CD4-positive, alpha-beta T cell (primary cell): ENCODE measurements at regions of chr6 and their contacts with region 1.

Region 1: GRCh38 chr6:110179401-110180227 is at the start of gene WASF1:
- DNase-seq: peak; percentile 78 to 96 (median 86)
- ATAC-seq: peak; percentile 89
- H3K4me3 ChIP-seq: peak within 1 kb of the TSS; percentile 95
- H3K4me3 Mint-ChIP-seq: peak within 1 kb of the TSS; percentile 84
- H3K27ac ChIP-seq: peak within 1 kb of the TSS; percentile 74 to 78
- H3K27ac Mint-ChIP-seq: peak within 1 kb of the TSS; percentile 16
- H3K4me1 ChIP-seq: peaks cover 28% of the 10 kb centered on the region
- H3K4me1 Mint-ChIP-seq: peaks cover 12% of the 10 kb centered on the region
- H3K27me3 ChIP-seq: peaks cover 0 to 9% of the 10 kb centered on the region in 2 experiments
- H3K27me3 Mint-ChIP-seq: peaks cover 10% of the 10 kb centered on the region
- CTCF ChIP-seq: no peak
- total RNA-seq, gene WASF1: 0.19 to 0.22 TPM

Region 2: DNA sequence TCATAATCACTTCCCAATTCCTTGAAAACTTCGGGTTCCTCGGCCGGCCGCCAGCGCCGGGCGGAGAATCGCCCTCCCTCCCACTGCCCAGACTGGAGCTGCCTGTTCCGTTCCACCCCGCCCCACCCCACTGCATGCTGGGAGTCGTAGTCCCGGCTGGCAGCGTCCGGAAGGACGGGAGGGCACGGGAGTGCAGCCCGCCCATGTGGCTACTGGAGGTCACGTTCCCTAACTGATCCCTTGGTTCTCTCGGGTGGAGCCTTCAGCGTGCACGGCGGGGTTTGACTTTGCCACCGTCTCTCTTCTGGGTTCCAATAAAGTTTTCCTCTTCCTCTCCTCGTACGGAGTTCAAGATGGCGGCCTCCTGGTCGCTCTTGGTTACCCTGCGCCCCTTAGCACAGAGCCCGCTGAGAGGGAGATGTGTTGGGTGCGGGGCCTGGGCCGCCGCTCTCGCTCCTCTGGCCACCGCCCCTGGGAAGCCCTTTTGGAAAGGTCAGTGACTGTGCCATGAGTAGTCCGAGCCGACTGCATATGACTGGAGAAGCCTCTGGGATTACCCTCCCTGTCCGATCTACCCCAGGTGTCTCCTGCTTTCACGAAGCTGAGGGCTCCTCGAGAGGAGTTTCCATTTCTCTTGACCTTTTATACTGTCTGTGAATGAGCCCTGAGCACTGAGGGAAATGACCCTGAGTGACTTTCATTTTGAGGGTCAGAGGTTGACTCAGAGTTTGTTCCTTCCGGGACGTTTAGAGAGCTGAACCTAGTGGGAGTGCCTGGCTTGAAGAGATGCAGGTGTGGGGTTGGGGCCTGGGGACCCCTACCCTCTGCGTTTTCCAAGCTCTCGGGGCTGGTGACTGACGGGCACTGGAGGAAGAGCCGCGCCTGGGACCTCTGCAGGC is 1884.6 kb before region 1 on chr6 and contains the start of gene AFG1L:
- CTCF ChIA-PET with region 1: no interaction called
- POLR2A ChIA-PET with region 1: interaction called, 3 read pairs
- intact Hi-C with region 1: loop called in 1 of 2 experiments (anchors 10 kb)
- DNase-seq: peak; percentile 77 to 90 (median 83)
- ATAC-seq: peak; percentile 89
- H3K4me3 ChIP-seq: peak within 1 kb of the TSS; percentile 91
- H3K4me3 Mint-ChIP-seq: peak within 1 kb of the TSS; percentile 97
- H3K27ac ChIP-seq: peak within 1 kb of the TSS; percentile 93 to 95
- H3K27ac Mint-ChIP-seq: peak within 1 kb of the TSS; percentile 96
- H3K4me1 ChIP-seq: peaks cover 17% of the 10 kb centered on the region
- H3K4me1 Mint-ChIP-seq: peaks cover 30% of the 10 kb centered on the region
- H3K27me3 ChIP-seq: no peaks in the 10 kb centered on the region
- H3K27me3 Mint-ChIP-seq: no peaks in the 10 kb centered on the region
- CTCF ChIP-seq: no peak
- total RNA-seq, gene AFG1L: 3.0 to 3.9 TPM

Region 3: GRCh38 chr6:110039364-110039980 is 140.1 kb before region 1 on chr6:
- CTCF ChIA-PET with region 1: interaction called, 3 read pairs
- POLR2A ChIA-PET with region 1: interaction called, 18 read pairs
- intact Hi-C with region 1: no loop called
- DNase-seq: peak; percentile 66 to 89 (median 76)
- ATAC-seq: peak; percentile 80
- H3K4me3 ChIP-seq: peak overlapping the region; percentile 47
- H3K4me3 Mint-ChIP-seq: peak overlapping the region; percentile 90
- H3K27ac ChIP-seq: peak overlapping the region; percentile 39 to 44
- H3K27ac Mint-ChIP-seq: peak overlapping the region; percentile 87
- H3K4me1 ChIP-seq: peaks cover 11% of the 10 kb centered on the region
- H3K4me1 Mint-ChIP-seq: peaks cover 13% of the 10 kb centered on the region
- H3K27me3 ChIP-seq: no peaks in the 10 kb centered on the region
- H3K27me3 Mint-ChIP-seq: no peaks in the 10 kb centered on the region
- CTCF ChIP-seq: peak; percentile 89

Region 4: DNA sequence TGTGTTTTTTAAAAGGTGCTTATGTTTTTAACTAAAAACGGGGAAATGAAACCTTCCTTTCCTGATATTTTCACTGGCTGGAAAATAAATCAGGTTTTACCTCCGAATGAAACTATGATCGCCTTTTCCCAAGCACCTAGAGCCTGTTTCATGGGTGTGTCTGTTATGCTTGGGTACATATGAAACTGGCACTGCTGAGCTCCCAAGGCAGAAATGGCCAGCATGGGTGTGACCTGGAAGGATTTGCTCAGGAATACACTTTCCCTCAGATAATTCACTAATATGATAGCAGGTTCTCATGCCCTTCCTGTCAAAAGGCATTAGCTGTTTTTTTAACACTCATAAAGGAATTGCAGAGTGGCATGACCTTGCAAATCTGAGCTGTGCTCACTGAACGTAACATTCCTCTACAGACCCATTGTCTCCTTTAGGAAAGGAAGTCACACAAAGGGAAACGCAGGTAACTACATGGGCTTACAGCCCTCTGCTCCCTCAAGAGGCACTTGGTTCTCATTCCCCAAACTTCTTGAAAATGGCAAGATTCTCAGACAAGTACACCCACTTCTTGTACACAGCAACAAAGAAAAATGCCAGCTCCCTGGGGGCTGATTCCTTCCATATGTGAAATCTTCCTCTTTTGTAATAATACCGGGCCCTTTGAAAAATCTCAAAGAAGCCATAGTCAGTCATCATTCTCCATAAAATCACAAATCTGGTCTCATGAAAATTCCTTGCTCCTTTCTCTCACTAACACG is 105.9 kb after region 1 on chr6:
- CTCF ChIA-PET with region 1: no interaction called
- POLR2A ChIA-PET with region 1: no interaction called
- intact Hi-C with region 1: no loop called
- DNase-seq: no peak
- ATAC-seq: no peak
- H3K4me3 ChIP-seq: no peak overlapping the region
- H3K4me3 Mint-ChIP-seq: no peak overlapping the region
- H3K27ac ChIP-seq: no peak overlapping the region
- H3K27ac Mint-ChIP-seq: no peak overlapping the region
- H3K4me1 ChIP-seq: no peaks in the 10 kb centered on the region
- H3K4me1 Mint-ChIP-seq: no peaks in the 10 kb centered on the region
- H3K27me3 ChIP-seq: peaks cover 0 to 8% of the 10 kb centered on the region in 2 experiments
- H3K27me3 Mint-ChIP-seq: peaks cover 4% of the 10 kb centered on the region
- CTCF ChIP-seq: no peak

Region 5: DNA sequence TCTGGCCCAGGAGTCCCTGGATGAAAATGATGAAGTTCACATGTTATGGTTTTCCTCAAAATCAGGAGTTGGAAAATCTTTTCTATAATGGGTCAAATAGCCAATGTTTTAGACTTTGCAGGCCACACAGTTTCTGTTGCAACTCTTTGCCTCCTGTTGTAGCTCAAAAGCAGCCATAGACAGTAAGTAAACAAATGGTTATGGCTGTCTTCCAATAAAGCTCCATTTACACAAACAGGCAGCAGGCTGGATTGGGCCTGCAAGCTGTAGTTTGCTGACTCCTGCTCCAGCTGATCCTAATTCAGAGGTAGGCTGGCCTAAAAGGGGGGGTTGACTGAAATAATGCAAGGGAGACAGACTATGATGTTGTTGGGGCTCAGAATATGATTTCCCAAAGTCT is 145.6 kb after region 1 on chr6:
- CTCF ChIA-PET with region 1: no interaction called
- POLR2A ChIA-PET with region 1: no interaction called
- intact Hi-C with region 1: no loop called
- DNase-seq: no peak
- ATAC-seq: no peak
- H3K4me3 ChIP-seq: no peak overlapping the region
- H3K4me3 Mint-ChIP-seq: no peak overlapping the region
- H3K27ac ChIP-seq: no peak overlapping the region
- H3K27ac Mint-ChIP-seq: no peak overlapping the region
- H3K4me1 ChIP-seq: no peaks in the 10 kb centered on the region
- H3K4me1 Mint-ChIP-seq: no peaks in the 10 kb centered on the region
- H3K27me3 ChIP-seq: peaks cover 0 to 2% of the 10 kb centered on the region in 2 experiments
- H3K27me3 Mint-ChIP-seq: no peaks in the 10 kb centered on the region
- CTCF ChIP-seq: no peak

Region 6: GRCh38 chr6:110389689-110390382 is 210.2 kb after region 1 on chr6:
- CTCF ChIA-PET with region 1: no interaction called
- POLR2A ChIA-PET with region 1: interaction called, 14 read pairs
- intact Hi-C with region 1: loop called (anchors 1 to 2 kb)
- DNase-seq: no peak
- ATAC-seq: peak; percentile 23
- H3K4me3 ChIP-seq: no peak overlapping the region
- H3K4me3 Mint-ChIP-seq: no peak overlapping the region
- H3K27ac ChIP-seq: no peak overlapping the region
- H3K27ac Mint-ChIP-seq: peak overlapping the region; percentile 75
- H3K4me1 ChIP-seq: peaks cover 5% of the 10 kb centered on the region
- H3K4me1 Mint-ChIP-seq: peaks cover 27% of the 10 kb centered on the region
- H3K27me3 ChIP-seq: no peaks in the 10 kb centered on the region
- H3K27me3 Mint-ChIP-seq: no peaks in the 10 kb centered on the region
- CTCF ChIP-seq: no peak

Region 7: DNA sequence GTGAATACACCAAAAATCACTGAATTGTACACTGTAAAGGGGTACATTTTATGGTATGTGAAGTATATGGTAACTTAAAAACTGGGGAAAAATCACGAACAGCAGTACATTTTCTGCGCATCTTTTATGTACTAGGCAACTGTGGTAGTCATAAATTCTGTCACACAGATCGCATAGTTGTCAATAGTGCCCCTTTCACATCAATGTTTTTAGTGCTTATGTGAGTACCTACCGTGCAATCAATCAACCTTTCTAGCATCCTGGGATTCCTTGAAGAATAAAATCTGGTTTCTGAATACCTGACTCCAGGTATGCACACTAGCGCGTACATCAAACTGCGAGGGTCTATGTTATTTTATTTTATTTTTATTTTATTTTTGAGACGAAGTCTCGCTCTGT is 801.6 kb after region 1 on chr6:
- CTCF ChIA-PET with region 1: no interaction called
- POLR2A ChIA-PET with region 1: no interaction called
- intact Hi-C with region 1: loop called in 1 of 2 experiments (anchors 5 kb)
- DNase-seq: peak in 1 of 14 experiments; percentile 43
- ATAC-seq: peak; percentile 1
- H3K4me3 ChIP-seq: peak overlapping the region; percentile 99
- H3K4me3 Mint-ChIP-seq: peak overlapping the region; percentile 99
- H3K27ac ChIP-seq: peak overlapping the region; percentile 77 to 97
- H3K27ac Mint-ChIP-seq: peak overlapping the region; percentile 99
- H3K4me1 ChIP-seq: peaks cover 14% of the 10 kb centered on the region
- H3K4me1 Mint-ChIP-seq: peaks cover 49% of the 10 kb centered on the region
- H3K27me3 ChIP-seq: no peaks in the 10 kb centered on the region
- H3K27me3 Mint-ChIP-seq: no peaks in the 10 kb centered on the region
- CTCF ChIP-seq: no peak